Natural killer cell (primary cell): ENCODE measurements at regions of chr4 and their contacts with region 1.

Region 1: GRCh38 chr4:140252742-140253555 is 99.0 kb upstream of the MAML3 start:
- DNase-seq: peak; percentile 53 to 79
- ATAC-seq: peak; percentile 79 to 89 (median 80)
- H3K4me3 ChIP-seq: peak overlapping the region; percentile 44
- H3K4me3 Mint-ChIP-seq: peak overlapping the region; percentile 70
- H3K27ac ChIP-seq: no peak overlapping the region
- H3K27ac Mint-ChIP-seq: no peak overlapping the region
- H3K4me1 ChIP-seq: no peaks in the 10 kb centered on the region
- H3K4me1 Mint-ChIP-seq: peaks cover 0 to 5% of the 10 kb centered on the region in 2 donors
- H3K27me3 ChIP-seq: peaks cover 7% of the 10 kb centered on the region
- H3K27me3 Mint-ChIP-seq: peaks cover 27 to 41% of the 10 kb centered on the region in 2 donors
- CTCF ChIP-seq: peak; percentile 98

Region 2: GRCh38 chr4:139603576-139604387 is 649.2 kb before region 1 on chr4:
- intact Hi-C with region 1: loop called (anchors 10 kb)
- DNase-seq: peak in 1 of 2 donors; percentile 70
- ATAC-seq: peak in 1 of 3 donors; percentile 48
- H3K4me3 ChIP-seq: no peak overlapping the region
- H3K4me3 Mint-ChIP-seq: no peak overlapping the region
- H3K27ac ChIP-seq: no peak overlapping the region
- H3K27ac Mint-ChIP-seq: no peak overlapping the region
- H3K4me1 ChIP-seq: peaks cover 9% of the 10 kb centered on the region
- H3K4me1 Mint-ChIP-seq: peaks cover 16 to 17% of the 10 kb centered on the region in 2 donors
- H3K27me3 ChIP-seq: no peaks in the 10 kb centered on the region
- H3K27me3 Mint-ChIP-seq: peaks cover 18 to 25% of the 10 kb centered on the region in 2 donors
- CTCF ChIP-seq: peak; percentile 56

Region 3: DNA sequence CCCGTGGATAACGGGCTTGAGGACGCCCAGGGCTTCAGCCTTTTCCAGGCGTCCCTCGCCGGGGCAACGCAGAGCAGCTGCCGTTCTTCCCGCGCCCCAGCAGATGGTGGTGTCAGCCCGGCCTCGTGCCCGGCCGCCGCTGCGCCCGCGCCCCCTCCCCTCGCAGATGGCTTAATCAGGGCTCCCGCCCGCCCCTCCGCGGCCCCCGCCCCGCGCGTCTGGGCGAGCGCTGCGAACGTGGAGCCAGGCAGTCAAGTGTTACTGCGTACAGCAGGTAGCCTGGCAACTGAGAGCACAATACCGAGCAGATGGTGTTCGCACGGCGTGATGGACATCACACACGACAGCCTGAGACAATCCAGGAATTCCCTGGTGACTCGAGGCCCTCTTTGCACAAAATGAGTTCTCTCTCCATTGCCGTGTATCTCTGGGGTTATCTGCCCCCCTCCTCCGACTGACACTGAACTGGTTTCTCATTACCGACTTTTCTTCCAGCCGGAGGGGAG is 518.0 kb before region 1 on chr4:
- intact Hi-C with region 1: loop called (anchors 2 kb)
- DNase-seq: peak; percentile 61 to 63
- ATAC-seq: peak; percentile 87
- H3K4me3 ChIP-seq: peak overlapping the region; percentile 23
- H3K4me3 Mint-ChIP-seq: peak overlapping the region; percentile 81
- H3K27ac ChIP-seq: no peak overlapping the region
- H3K27ac Mint-ChIP-seq: peak overlapping the region in 1 of 2 donors; percentile 43
- H3K4me1 ChIP-seq: peaks cover 14% of the 10 kb centered on the region
- H3K4me1 Mint-ChIP-seq: peaks cover 9 to 11% of the 10 kb centered on the region in 2 donors
- H3K27me3 ChIP-seq: no peaks in the 10 kb centered on the region
- H3K27me3 Mint-ChIP-seq: peaks cover 11 to 28% of the 10 kb centered on the region in 2 donors
- CTCF ChIP-seq: peak; percentile 62

Region 4: GRCh38 chr4:140012688-140013486 is 240.1 kb before region 1 on chr4:
- intact Hi-C with region 1: loop called (anchors 1 kb)
- DNase-seq: peak in 1 of 2 donors; percentile 81
- ATAC-seq: peak; percentile 79 to 91 (median 81)
- H3K4me3 ChIP-seq: no peak overlapping the region
- H3K4me3 Mint-ChIP-seq: no peak overlapping the region
- H3K27ac ChIP-seq: no peak overlapping the region
- H3K27ac Mint-ChIP-seq: no peak overlapping the region
- H3K4me1 ChIP-seq: no peaks in the 10 kb centered on the region
- H3K4me1 Mint-ChIP-seq: peaks cover 6 to 9% of the 10 kb centered on the region in 2 donors
- H3K27me3 ChIP-seq: no peaks in the 10 kb centered on the region
- H3K27me3 Mint-ChIP-seq: peaks cover 21 to 36% of the 10 kb centered on the region in 2 donors
- CTCF ChIP-seq: peak; percentile 66

Region 5: DNA sequence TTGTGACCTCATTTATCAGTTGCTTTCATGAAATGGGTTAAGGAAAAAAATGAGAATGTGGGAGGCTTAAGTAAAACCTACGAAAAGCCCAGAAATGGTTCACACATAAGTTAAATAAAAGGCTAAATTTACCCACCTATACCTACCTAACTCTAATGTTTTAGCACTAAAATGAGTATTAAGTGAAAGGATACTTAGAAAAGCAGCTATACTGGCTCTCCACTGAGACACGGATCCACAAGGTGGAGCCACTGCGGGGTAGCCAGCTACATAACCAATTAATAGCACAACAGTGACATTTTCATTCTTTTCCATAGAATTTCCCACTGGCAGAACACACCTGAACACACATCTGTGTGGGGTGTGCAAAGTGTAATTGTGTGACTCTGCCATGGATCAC is 200.9 kb before region 1 on chr4:
- intact Hi-C with region 1: loop called (anchors 5 kb)
- DNase-seq: peak in 1 of 2 donors; percentile 60
- ATAC-seq: no peak
- H3K4me3 ChIP-seq: no peak overlapping the region
- H3K4me3 Mint-ChIP-seq: no peak overlapping the region
- H3K27ac ChIP-seq: no peak overlapping the region
- H3K27ac Mint-ChIP-seq: no peak overlapping the region
- H3K4me1 ChIP-seq: peaks cover 25% of the 10 kb centered on the region
- H3K4me1 Mint-ChIP-seq: peaks cover 24 to 32% of the 10 kb centered on the region in 2 donors
- H3K27me3 ChIP-seq: peaks cover 5% of the 10 kb centered on the region
- H3K27me3 Mint-ChIP-seq: peaks cover 40 to 68% of the 10 kb centered on the region in 2 donors
- CTCF ChIP-seq: no peak